Right ventricle myocardium superior (tissue), 1 donor: ENCODE measurements at regions of chr7 and their contacts with region 1.

Region 1: DNA sequence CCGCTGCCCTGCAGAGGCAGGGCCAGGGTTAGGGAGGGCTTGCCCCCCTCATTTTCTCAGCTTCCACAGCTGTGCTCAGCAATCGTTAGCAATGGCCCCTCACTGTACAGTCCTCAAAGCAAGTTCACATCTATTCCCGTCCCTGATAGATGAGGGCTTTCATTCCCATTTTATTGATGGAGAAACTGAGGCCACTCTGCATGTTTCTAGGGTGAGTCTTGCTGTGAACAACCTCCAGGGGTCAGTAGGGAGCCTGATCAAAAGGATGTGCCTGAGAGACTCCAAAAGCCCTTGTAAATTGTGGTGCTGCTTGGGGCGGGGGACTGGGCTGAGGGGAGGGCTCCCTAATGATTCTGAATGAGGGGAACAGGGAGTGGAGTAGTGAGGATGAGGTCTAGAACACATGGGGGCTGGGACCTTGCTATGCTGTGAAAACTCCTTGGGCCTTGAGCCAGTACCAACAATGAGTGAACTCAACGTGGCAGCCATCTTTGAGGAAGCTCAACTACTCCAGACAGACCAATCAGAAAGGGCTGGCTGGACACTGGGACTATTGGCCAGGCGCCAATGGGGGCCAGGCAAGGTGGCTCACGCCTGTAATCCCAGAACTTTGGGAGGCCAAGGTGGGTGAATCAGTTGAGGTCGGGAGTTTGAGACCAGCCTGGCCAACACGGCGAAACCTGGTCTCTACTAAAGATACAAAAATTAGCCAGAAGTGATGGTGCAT is 6.7 kb upstream of the GRIFIN start:
- DNase-seq: no peak
- ATAC-seq: no peak

Region 2: GRCh38 chr7:2529161-2530070 is 46.5 kb after region 1 on chr7:
- intact Hi-C with region 1: loop called (anchors 5 kb)
- DNase-seq: peak; percentile 89
- ATAC-seq: peak; percentile 61